ENCODE measurements at regions of chr17 and their contacts with region 1.

Region 1: GRCh38 chr17:44911133-44912001 is 3.9 kb downstream of the GFAP start:
- DNase-seq: peak; percentile 35
- H3K4me3 ChIP-seq: no peak overlapping the region
- H3K27ac ChIP-seq: no peak overlapping the region
- H3K4me1 ChIP-seq: no peaks in the 10 kb centered on the region
- H3K27me3 ChIP-seq: no peaks in the 10 kb centered on the region
- CTCF ChIP-seq: no peak

Region 2: DNA sequence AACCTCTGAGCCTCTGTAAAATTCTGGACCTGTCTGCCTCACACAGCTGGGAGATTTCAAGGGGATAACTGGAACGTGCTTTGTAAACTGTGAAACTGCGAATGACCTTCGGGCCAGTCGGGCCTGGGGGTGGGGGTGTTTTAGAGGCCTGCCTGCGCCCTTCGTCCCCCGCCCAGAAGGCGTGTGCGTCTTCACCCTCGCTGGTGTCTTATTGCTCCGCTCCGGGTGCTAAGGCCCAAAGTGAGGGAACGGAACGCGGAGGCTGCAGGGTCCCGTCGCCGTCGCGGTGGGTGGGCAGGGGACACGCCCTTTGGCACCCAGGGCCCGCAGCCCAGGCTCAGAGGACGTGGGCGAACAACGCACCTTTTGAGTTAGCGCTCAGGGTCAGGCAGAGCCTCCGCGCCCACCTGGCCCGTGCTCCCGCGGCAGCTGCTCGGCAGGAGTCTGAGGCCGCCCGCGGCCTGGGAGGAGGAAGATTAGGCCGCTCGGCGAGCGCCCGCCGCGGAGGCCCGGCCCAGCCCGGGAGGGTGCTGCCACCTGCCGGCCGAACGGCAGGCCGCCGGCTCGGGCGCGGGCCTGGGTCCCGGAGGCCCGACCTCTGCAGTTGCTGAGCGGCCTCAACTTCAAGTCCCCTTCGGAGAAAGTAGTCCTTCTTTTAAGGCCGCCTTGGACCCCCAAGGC is 110.4 kb after region 1 on chr17:
- CTCF ChIA-PET with region 1: no interaction called
- POLR2A ChIA-PET with region 1: no interaction called
- intact Hi-C with region 1: no loop called
- DNase-seq: peak; percentile 60
- H3K4me3 ChIP-seq: peak overlapping the region; percentile 36
- H3K27ac ChIP-seq: no peak overlapping the region
- H3K4me1 ChIP-seq: no peaks in the 10 kb centered on the region
- H3K27me3 ChIP-seq: no peaks in the 10 kb centered on the region
- CTCF ChIP-seq: peak; percentile 55; the same call in 1 of the 2 replicates

Region 3: DNA sequence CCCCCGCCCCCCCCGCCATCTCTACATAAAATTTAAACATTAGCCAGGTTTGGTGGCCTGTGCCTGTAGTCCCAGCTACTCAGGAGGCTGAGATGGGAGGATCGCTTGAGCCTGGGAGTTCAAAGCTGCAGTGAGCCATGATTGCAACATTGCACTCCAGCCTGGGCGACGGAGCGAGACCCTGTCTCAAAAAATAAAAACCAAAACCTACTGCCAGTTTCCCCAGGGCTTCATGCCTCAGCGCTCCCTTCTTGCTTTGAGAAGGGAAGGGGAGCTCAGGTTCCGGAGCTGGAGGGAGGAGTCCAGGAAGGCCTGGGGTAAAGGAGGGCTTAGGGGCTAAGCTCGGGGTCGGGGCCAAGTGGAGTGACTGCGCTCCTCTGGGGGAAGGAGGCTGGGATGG is 200.5 kb after region 1 on chr17:
- CTCF ChIA-PET with region 1: interaction called, 11 read pairs
- POLR2A ChIA-PET with region 1: no interaction called
- intact Hi-C with region 1: no loop called
- DNase-seq: no peak
- H3K4me3 ChIP-seq: no peak overlapping the region
- H3K27ac ChIP-seq: no peak overlapping the region
- H3K4me1 ChIP-seq: no peaks in the 10 kb centered on the region
- H3K27me3 ChIP-seq: no peaks in the 10 kb centered on the region
- CTCF ChIP-seq: no peak